HEK293 (cell line): ENCODE measurements at regions of chr2 and their contacts with region 1.

Region 1: GRCh38 chr2:158745044-158745865 is 49.9 kb upstream of the DAPL1 start:
- H3K4me3 ChIP-seq: no peak overlapping the region
- H3K27ac ChIP-seq: no peak overlapping the region
- H3K4me1 ChIP-seq: no peaks in the 10 kb centered on the region
- CTCF ChIP-seq: peak; percentile 61; the same call in 1 of the 2 replicates

Region 2: GRCh38 chr2:158024288-158024898 is 720.9 kb before region 1 on chr2:
- CTCF ChIA-PET with region 1: interaction called, 37 read pairs
- POLR2A ChIA-PET with region 1: no interaction called
- H3K4me3 ChIP-seq: no peak overlapping the region
- H3K27ac ChIP-seq: no peak overlapping the region
- H3K4me1 ChIP-seq: no peaks in the 10 kb centered on the region
- CTCF ChIP-seq: peak; percentile 28; the same call in 1 of the 2 replicates

Region 3: DNA sequence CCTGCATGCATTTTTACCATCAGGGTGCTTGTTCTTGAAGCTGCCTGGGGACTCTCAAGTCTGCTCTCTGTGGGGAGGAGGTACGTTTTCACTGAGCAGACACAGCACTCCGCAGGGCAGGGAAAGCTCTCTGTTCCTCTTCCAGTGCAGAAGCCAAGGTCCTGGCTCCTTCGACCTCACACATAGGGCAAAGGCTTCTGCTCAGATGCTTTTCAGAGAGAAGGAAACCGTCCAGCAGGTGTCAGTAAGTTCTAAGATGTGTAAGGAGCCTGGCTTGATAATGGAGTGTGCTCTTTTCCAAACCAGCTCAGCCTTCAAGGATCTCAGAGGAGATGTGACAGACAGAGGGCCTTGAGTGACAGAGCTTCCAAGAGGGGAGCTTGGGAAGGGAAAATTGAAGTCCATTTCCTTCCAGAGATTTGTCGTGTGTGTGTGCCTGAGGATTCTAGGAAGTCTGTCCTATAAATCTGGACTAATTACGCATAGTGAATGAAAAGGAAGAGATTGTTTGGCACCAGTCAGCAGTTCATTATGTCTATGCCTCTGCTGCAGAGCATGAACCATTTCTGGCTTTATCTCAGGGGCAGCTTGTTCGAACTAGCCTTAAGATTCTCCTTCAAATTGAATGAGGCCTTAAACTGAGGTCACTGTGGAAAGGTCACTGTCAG is 710.9 kb before region 1 on chr2:
- CTCF ChIA-PET with region 1: interaction called, 51 read pairs
- POLR2A ChIA-PET with region 1: no interaction called
- H3K4me3 ChIP-seq: no peak overlapping the region
- H3K27ac ChIP-seq: no peak overlapping the region
- H3K4me1 ChIP-seq: no peaks in the 10 kb centered on the region
- CTCF ChIP-seq: peak; percentile 48; the same call in 1 of the 2 replicates

Region 4: GRCh38 chr2:158179660-158180059 is 565.6 kb before region 1 on chr2:
- CTCF ChIA-PET with region 1: interaction called, 27 read pairs
- POLR2A ChIA-PET with region 1: no interaction called
- H3K4me3 ChIP-seq: no peak overlapping the region
- H3K27ac ChIP-seq: no peak overlapping the region
- H3K4me1 ChIP-seq: no peaks in the 10 kb centered on the region
- CTCF ChIP-seq: peak; percentile 26; the same call in 1 of the 2 replicates

Region 5: GRCh38 chr2:158487419-158487818 is 257.8 kb before region 1 on chr2:
- CTCF ChIA-PET with region 1: no interaction called
- POLR2A ChIA-PET with region 1: no interaction called
- H3K4me3 ChIP-seq: no peak overlapping the region
- H3K27ac ChIP-seq: no peak overlapping the region
- H3K4me1 ChIP-seq: peaks cover 18% of the 10 kb centered on the region
- CTCF ChIP-seq: no peak

Region 6: GRCh38 chr2:158723917-158724690 is 21.2 kb before region 1 on chr2:
- CTCF ChIA-PET with region 1: interaction called, 17 read pairs
- POLR2A ChIA-PET with region 1: no interaction called
- H3K4me3 ChIP-seq: no peak overlapping the region
- H3K27ac ChIP-seq: no peak overlapping the region
- H3K4me1 ChIP-seq: no peaks in the 10 kb centered on the region
- CTCF ChIP-seq: peak; percentile 49; the same call in 1 of the 2 replicates

Region 7: DNA sequence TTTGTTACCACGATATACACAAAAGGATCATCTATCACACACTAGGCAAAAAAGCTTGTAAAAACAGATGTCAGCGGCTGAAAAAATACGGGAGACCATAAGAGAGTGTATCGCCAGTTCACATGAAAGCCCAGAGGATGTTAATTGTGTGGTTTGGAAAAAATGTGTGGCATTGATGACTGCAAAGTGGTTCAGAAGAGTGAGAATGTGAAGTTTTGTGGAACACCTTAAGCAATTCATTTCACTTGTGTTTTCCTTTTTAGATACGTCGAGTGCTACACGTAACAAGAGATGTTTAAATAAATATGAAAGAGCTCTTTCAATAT is 11.9 kb before region 1 on chr2:
- CTCF ChIA-PET with region 1: interaction called, 41 read pairs
- POLR2A ChIA-PET with region 1: interaction called, 3 read pairs
- H3K4me3 ChIP-seq: no peak overlapping the region
- H3K27ac ChIP-seq: no peak overlapping the region
- H3K4me1 ChIP-seq: peaks cover 5% of the 10 kb centered on the region; the same call in 1 of the 2 replicates
- CTCF ChIP-seq: no peak